Sigmoid colon (tissue), 7 donors: ENCODE measurements at regions of chr2 and their contacts with region 1.

Region 1: GRCh38 chr2:96265840-96266679 is at the starts of genes CIAO1 and TMEM127:
- DNase-seq: peak; percentile 99
- H3K4me3 ChIP-seq: peak within 1 kb of the TSS; percentile 80 to 95 (median 90)
- H3K27ac ChIP-seq: peak within 1 kb of the TSS; percentile 88 to 96 (median 92)
- H3K4me1 ChIP-seq: peaks cover 0 to 47% (median 45%) of the 10 kb centered on the region in 4 donors
- H3K27me3 ChIP-seq: no peaks in the 10 kb centered on the region
- CTCF ChIP-seq: peak; percentile 20 to 46 (median 34)
- EP300 ChIP-seq: no peak
- POLR2A ChIP-seq: peak; percentile 88 to 92
- total RNA-seq, gene CIAO1: 77.4 to 110 (median 95.2) TPM
- total RNA-seq, gene TMEM127: 24.6 to 30.5 (median 27.9) TPM

Region 2: GRCh38 chr2:95165129-95166064 is 1100.7 kb before region 1 on chr2 and contains the start of gene ZNF2:
- intact Hi-C with region 1: loop called (anchors 10 kb)
- DNase-seq: peak; percentile 99
- H3K4me3 ChIP-seq: peak within 1 kb of the TSS; percentile 66 to 82 (median 72)
- H3K27ac ChIP-seq: peak within 1 kb of the TSS; percentile 90 to 97 (median 91)
- H3K4me1 ChIP-seq: peaks cover 0 to 24% (median 18%) of the 10 kb centered on the region in 4 donors
- H3K27me3 ChIP-seq: no peaks in the 10 kb centered on the region
- CTCF ChIP-seq: no peak
- EP300 ChIP-seq: no peak
- POLR2A ChIP-seq: peak; percentile 32 to 49
- total RNA-seq, gene ZNF2: 2.5 to 5.8 (median 3.3) TPM

Region 3: DNA sequence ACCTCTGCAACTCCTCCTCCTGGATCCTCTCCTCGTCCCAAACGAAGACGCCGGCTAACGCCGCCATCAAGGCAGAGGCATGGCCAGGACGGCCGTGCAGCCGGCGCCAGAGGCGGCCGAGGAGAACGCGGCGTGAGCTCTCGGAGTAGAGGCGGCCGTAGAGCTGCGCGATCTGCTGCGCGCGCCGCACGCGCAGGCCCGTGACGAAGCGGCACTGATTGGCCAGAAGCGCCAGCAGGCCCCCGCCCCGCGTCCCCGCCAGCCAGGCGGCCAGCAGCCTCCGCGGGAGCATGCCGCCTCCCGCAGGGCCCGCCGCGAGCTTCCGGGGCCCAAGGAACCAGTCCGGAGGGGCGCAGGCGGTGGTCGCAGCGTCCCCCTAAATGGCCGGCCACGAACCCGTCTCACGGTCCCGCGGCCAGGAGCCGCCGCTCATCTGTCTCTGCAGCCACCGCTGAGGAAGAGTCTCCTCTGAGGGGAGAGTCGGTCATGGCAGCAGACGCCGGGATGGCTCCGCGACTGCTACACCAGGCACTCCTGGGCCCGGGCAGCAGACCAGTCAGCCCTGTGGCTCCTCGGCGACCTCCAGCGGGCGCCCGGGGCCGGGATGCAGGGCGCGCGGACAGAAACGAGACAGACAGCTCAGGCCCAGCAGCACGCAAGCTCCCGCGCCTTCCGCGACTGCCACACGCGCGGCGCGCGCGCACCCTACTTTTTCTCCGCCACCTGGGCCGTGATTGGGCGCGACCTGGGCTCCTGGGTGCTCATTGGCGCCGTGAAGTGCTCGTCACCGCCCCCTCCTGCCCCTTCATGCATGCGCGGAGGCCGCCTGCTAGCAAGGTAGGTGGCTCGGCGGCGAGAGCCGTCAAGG is 57.7 kb before region 1 on chr2 and contains the start of gene STARD7:
- intact Hi-C with region 1: loop called (anchors 2 kb)
- DNase-seq: peak; percentile 99
- H3K4me3 ChIP-seq: peak within 1 kb of the TSS; percentile 60 to 99 (median 86)
- H3K27ac ChIP-seq: peak within 1 kb of the TSS; percentile 89 to 98 (median 94)
- H3K4me1 ChIP-seq: peaks cover 0 to 53% (median 51%) of the 10 kb centered on the region in 4 donors
- H3K27me3 ChIP-seq: no peaks in the 10 kb centered on the region
- CTCF ChIP-seq: no peak
- EP300 ChIP-seq: no peak
- POLR2A ChIP-seq: peak in 1 of 2 donors; percentile 96
- total RNA-seq, gene STARD7: 50.4 to 88.5 (median 73.1) TPM

Region 4: DNA sequence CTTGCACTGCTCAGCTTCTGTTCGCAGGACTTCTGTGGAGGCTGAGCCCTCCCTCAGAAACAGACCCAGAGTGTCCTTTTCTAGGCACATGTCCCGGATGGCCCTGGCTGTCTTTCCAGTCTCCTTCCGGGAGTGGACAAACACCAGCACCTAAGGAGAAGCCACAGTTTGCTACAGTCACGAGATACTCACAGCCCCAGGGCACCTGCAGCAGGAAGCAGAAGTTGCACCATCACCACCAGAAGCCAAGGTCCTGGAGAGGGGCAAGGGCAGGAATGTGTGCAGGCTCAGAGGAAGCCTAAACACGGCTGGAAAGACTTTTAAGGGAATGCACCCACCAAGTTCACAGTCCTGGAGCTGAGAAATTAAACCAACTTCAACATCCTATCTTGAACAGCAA is 25.7 kb after region 1 on chr2:
- intact Hi-C with region 1: no loop called
- DNase-seq: no peak
- H3K4me3 ChIP-seq: no peak overlapping the region
- H3K27ac ChIP-seq: no peak overlapping the region
- H3K4me1 ChIP-seq: no peaks in the 10 kb centered on the region
- H3K27me3 ChIP-seq: no peaks in the 10 kb centered on the region
- CTCF ChIP-seq: no peak
- EP300 ChIP-seq: no peak
- POLR2A ChIP-seq: no peak

Region 5: GRCh38 chr2:96305091-96305978 is 39.3 kb after region 1 on chr2 and contains the start of gene SNRNP200:
- intact Hi-C with region 1: loop called (anchors 2 kb)
- DNase-seq: peak; percentile 93
- H3K4me3 ChIP-seq: peak within 1 kb of the TSS; percentile 79 to 98 (median 87)
- H3K27ac ChIP-seq: peak within 1 kb of the TSS; percentile 84 to 88 (median 85)
- H3K4me1 ChIP-seq: peaks cover 0 to 39% (median 15%) of the 10 kb centered on the region in 4 donors
- H3K27me3 ChIP-seq: no peaks in the 10 kb centered on the region
- CTCF ChIP-seq: no peak
- EP300 ChIP-seq: no peak
- POLR2A ChIP-seq: peak; percentile 77 to 84
- total RNA-seq, gene SNRNP200: 69.4 to 86.1 (median 79.2) TPM

Region 6: GRCh38 chr2:96336104-96336775 is 70.2 kb after region 1 on chr2:
- intact Hi-C with region 1: loop called (anchors 5 kb)
- DNase-seq: no peak
- H3K4me3 ChIP-seq: peak overlapping the region; percentile 52 to 69 (median 62)
- H3K27ac ChIP-seq: peak overlapping the region; percentile 86 to 91 (median 88)
- H3K4me1 ChIP-seq: peaks cover 0 to 18% (median 8%) of the 10 kb centered on the region in 4 donors
- H3K27me3 ChIP-seq: no peaks in the 10 kb centered on the region
- CTCF ChIP-seq: no peak
- EP300 ChIP-seq: no peak
- POLR2A ChIP-seq: peak in 1 of 2 donors; percentile 19

Region 7: DNA sequence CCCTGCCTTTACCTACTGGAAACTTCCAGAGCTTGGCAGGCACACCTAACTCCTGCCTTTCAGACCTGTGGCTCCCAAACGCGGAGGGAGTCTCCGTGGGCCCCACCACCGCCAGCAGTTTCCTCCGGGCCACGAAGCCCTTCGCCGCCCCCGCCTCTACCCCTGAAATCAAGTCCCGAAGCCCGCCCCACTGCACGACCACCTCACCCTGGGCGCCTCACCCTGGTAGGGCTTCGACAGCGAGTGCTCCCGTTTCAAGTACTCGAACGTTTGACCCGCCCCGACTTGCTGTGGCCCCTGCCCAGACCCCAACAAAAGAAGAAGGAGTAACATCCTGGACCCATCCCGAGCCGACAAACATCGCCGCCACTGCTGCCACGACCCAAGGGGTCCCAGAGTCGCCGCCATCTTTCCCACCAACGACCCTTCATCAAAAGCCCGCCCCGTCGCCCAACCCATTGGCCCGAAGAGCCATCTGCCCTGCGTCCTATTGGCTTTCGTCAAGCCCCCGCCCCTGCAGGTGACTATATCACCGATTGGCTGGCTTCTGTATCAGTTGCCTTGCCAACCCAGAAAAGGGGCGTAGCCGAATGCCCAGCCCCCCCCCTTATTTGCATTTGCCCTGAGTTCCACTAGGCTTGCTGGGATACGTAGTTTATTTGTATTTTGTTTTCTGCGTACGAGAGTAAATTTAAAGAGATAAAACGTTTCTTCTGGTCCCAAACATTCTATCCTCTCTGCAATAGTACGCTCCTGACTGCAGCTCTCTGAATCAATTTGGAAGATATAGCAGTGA is 473.8 kb after region 1 on chr2 and contains the start of gene LMAN2L:
- intact Hi-C with region 1: loop called (anchors 5 kb)
- DNase-seq: peak; percentile 99
- H3K4me3 ChIP-seq: peak within 1 kb of the TSS; percentile 47 to 95 (median 74)
- H3K27ac ChIP-seq: peak within 1 kb of the TSS; percentile 73 to 84 (median 78)
- H3K4me1 ChIP-seq: peaks cover 0 to 35% (median 19%) of the 10 kb centered on the region in 4 donors
- H3K27me3 ChIP-seq: no peaks in the 10 kb centered on the region
- CTCF ChIP-seq: no peak
- EP300 ChIP-seq: no peak
- POLR2A ChIP-seq: peak; percentile 26 to 48
- total RNA-seq, gene LMAN2L: 11.9 to 23.2 (median 17.2) TPM